IMR-90 (cell line): ENCODE measurements at regions of chr4 and their contacts with region 1.

Region 1: GRCh38 chr4:122602277-122603142 is 18.4 kb downstream of the IL21 start:
- DNase-seq: peak; percentile 54
- ATAC-seq: peak; percentile 89
- H3K4me3 ChIP-seq: no peak overlapping the region
- H3K27ac ChIP-seq: no peak overlapping the region
- H3K4me1 ChIP-seq: no peaks in the 10 kb centered on the region
- H3K27me3 ChIP-seq: peaks cover 2% of the 10 kb centered on the region; the same call in 1 of the 2 replicates
- CTCF ChIP-seq: peak; percentile 54
- POLR2A ChIP-seq: no peak
- RAD21 ChIP-seq: peak; percentile 62

Region 2: GRCh38 chr4:122588453-122589238 is 13.9 kb before region 1 on chr4:
- CTCF ChIA-PET with region 1: no interaction called
- POLR2A ChIA-PET with region 1: no interaction called
- dilution Hi-C with region 1: no loop called
- in situ Hi-C with region 1: no loop called
- intact Hi-C with region 1: no loop called
- DNase-seq: peak; percentile 91
- ATAC-seq: peak; percentile 60
- H3K4me3 ChIP-seq: no peak overlapping the region
- H3K27ac ChIP-seq: no peak overlapping the region
- H3K4me1 ChIP-seq: peaks cover 12% of the 10 kb centered on the region
- H3K27me3 ChIP-seq: no peaks in the 10 kb centered on the region
- CTCF ChIP-seq: no peak
- POLR2A ChIP-seq: no peak
- RAD21 ChIP-seq: no peak

Region 3: DNA sequence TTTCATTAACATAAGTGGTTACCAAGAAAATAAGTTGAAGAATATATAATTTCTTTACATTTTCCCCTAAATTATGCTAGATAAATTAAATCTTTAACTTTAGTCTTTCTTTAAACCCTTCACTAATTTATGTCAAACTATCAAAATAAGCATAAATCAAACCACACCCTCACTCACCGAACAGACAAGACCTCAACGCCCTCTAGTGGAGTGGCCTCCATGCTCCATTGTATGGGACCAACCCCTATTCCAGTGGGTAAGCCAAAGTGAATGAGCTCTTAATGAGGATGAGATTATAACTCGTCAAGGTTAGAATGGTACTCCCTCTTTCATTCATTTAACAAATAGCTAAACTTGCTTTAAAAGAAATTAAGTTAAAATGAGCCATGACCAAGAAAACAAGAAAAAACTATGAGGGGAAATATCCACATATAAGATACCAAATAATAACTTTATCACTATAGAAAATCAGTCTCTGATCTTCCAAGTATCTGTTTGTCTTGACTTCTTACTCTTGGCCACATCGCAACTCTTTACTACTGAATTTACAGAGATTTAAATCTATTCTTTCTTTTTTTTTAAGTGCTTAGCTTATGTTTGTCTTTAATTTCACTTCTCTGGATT is 114.4 kb after region 1 on chr4:
- CTCF ChIA-PET with region 1: interaction called, 18 read pairs
- POLR2A ChIA-PET with region 1: interaction called, 5 read pairs
- dilution Hi-C with region 1: no loop called
- in situ Hi-C with region 1: loop called (anchors 5 kb)
- intact Hi-C with region 1: loop called (anchors 1 kb)
- DNase-seq: peak; percentile 63
- ATAC-seq: peak; percentile 90
- H3K4me3 ChIP-seq: no peak overlapping the region
- H3K27ac ChIP-seq: no peak overlapping the region
- H3K4me1 ChIP-seq: no peaks in the 10 kb centered on the region
- H3K27me3 ChIP-seq: no peaks in the 10 kb centered on the region
- CTCF ChIP-seq: peak; percentile 86
- POLR2A ChIP-seq: no peak
- RAD21 ChIP-seq: peak; percentile 80

Region 4: DNA sequence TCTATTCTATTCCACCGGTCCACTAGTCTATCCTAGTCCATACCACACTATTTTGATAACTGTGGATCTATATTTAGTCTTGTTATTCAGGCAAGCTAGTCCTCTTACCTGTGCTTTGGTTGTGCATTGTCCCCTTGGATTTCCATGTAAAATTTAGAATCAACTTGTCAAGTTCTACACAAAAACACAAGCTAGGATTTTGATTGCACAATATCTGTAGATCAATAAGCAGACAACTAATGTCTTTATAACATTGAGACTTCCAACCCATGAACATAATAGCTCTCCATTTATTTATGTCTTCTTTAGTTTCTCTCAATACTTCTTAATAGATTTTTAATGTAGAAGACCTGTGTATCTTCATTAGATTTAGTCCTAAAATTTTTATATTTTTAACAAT is 119.7 kb after region 1 on chr4:
- CTCF ChIA-PET with region 1: interaction called, 18 read pairs
- POLR2A ChIA-PET with region 1: no interaction called
- dilution Hi-C with region 1: no loop called
- in situ Hi-C with region 1: loop called (anchors 5 kb)
- intact Hi-C with region 1: loop called (anchors 1 kb)
- DNase-seq: no peak
- ATAC-seq: no peak
- H3K4me3 ChIP-seq: no peak overlapping the region
- H3K27ac ChIP-seq: no peak overlapping the region
- H3K4me1 ChIP-seq: no peaks in the 10 kb centered on the region
- H3K27me3 ChIP-seq: no peaks in the 10 kb centered on the region; the same call in 1 of the 2 replicates
- CTCF ChIP-seq: no peak
- POLR2A ChIP-seq: no peak
- RAD21 ChIP-seq: no peak

Region 5: DNA sequence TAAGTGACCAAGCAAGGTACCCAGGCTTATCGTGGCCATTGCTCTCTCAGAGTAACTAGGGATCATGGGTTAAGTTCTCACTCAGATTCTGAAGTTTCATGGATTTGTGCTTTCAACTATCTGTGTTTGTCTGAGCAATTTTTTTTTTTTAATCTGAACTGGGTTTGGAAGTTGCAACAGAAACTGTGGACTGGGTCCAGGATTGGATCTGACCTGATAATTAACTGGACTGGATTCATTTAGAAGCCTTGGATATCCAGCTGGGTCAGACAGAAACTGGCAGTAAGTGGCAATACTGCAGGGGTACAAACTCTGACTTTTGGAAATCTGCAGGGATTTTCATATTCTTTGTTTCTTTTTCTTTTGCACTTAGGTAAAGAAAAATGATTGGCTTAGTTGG is 185.4 kb after region 1 on chr4:
- CTCF ChIA-PET with region 1: no interaction called
- POLR2A ChIA-PET with region 1: no interaction called
- dilution Hi-C with region 1: no loop called
- in situ Hi-C with region 1: no loop called
- intact Hi-C with region 1: no loop called
- DNase-seq: no peak
- ATAC-seq: no peak
- H3K4me3 ChIP-seq: no peak overlapping the region
- H3K27ac ChIP-seq: no peak overlapping the region
- H3K4me1 ChIP-seq: peaks cover 4% of the 10 kb centered on the region
- H3K27me3 ChIP-seq: no peaks in the 10 kb centered on the region
- CTCF ChIP-seq: no peak
- POLR2A ChIP-seq: no peak
- RAD21 ChIP-seq: no peak

Region 6: DNA sequence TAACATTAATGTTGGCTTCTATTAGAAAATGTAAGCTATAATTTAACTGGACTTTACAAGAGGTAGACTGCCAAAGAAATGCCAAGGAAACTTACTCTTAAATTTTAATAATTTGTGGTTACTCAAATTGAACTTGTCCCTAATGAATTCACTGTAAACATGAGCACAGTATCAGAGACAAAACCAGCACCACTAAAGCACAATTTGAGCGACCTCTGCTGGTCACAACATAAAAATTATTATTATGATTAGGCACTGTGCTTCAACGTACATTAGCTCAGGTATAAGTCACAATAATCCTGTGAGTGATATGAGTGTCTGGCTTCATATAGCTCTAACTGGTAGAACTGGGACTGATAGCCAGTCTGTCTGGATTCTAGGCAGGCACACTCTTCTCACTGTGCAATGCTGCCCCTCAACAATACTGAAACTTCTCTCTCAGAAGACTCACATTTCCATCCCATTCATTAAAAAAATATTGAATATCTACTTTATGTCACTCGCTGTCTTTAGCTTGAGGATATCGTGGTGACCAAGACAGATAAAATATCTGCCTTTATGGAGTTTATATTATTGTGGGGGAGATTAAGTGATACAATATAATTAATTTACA is 311.9 kb after region 1 on chr4:
- CTCF ChIA-PET with region 1: interaction called, 7 read pairs
- POLR2A ChIA-PET with region 1: no interaction called
- dilution Hi-C with region 1: loop called (anchors 25 kb)
- in situ Hi-C with region 1: no loop called
- intact Hi-C with region 1: loop called (anchors 5 kb)
- DNase-seq: peak; percentile 68
- ATAC-seq: peak; percentile 89
- H3K4me3 ChIP-seq: no peak overlapping the region; the same call in 1 of the 2 replicates
- H3K27ac ChIP-seq: no peak overlapping the region
- H3K4me1 ChIP-seq: peaks cover 9% of the 10 kb centered on the region
- H3K27me3 ChIP-seq: no peaks in the 10 kb centered on the region
- CTCF ChIP-seq: peak; percentile 75
- POLR2A ChIP-seq: no peak
- RAD21 ChIP-seq: peak; percentile 84

Region 7: DNA sequence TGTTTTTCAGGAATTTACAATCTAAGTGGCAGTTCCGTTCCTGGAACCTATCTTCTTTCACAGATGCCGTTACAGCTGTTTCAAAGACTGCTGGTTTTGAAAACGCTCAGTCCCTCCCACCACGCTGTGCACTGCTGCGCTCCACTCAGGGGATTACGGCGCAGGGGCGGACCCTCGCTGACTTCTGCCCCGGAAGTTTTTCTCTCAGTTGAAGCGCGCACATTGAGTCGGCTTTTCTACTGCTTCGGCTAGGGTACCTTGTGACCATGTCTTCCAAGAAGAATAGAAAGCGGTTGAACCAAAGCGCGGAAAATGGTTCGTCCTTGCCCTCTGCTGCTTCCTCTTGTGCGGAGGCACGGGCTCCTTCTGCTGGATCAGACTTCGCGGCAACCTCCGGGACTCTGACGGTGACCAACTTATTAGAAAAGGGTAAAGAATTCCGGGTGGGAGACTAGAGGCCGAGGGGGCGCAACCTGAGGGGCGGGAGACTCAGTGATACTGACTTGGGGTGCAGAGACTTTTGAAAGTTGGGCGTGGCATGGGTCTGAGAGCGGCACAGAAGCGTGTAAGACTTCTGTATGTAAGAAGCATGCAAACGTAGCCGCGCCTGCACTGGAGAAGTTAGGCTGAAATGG is 320.5 kb after region 1 on chr4:
- CTCF ChIA-PET with region 1: no interaction called
- POLR2A ChIA-PET with region 1: no interaction called
- dilution Hi-C with region 1: loop called (anchors 25 kb)
- in situ Hi-C with region 1: loop called (anchors 5 kb)
- intact Hi-C with region 1: no loop called
- DNase-seq: peak; percentile 82
- ATAC-seq: peak; percentile 94
- H3K4me3 ChIP-seq: peak overlapping the region; percentile 93
- H3K27ac ChIP-seq: peak overlapping the region; percentile 83
- H3K4me1 ChIP-seq: no peaks in the 10 kb centered on the region
- H3K27me3 ChIP-seq: no peaks in the 10 kb centered on the region
- CTCF ChIP-seq: no peak
- POLR2A ChIP-seq: no peak
- RAD21 ChIP-seq: no peak

Region 8: DNA sequence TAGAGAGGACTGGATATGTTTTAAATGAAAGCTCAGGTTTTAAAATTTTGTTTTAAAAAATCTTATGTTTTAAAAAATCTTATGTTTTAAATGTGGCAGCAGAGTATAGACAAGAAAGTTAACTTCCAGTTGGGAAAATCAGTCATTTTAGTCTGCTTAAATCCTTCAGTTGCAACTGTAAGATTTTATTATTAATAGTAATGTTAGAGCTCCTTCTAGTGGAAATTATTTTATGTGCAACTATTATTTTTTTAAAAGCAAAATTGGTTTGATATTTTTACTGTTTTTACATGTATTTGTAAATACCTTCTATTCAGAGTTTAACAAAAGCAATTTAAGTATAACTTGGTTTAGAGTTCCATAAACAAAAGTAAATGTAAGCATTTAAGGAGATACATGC is 328.4 kb after region 1 on chr4:
- CTCF ChIA-PET with region 1: no interaction called
- POLR2A ChIA-PET with region 1: no interaction called
- dilution Hi-C with region 1: no loop called
- in situ Hi-C with region 1: no loop called
- intact Hi-C with region 1: loop called (anchors 2 kb)
- DNase-seq: peak; percentile 41
- ATAC-seq: no peak
- H3K4me3 ChIP-seq: no peak overlapping the region
- H3K27ac ChIP-seq: no peak overlapping the region
- H3K4me1 ChIP-seq: no peaks in the 10 kb centered on the region
- H3K27me3 ChIP-seq: no peaks in the 10 kb centered on the region
- CTCF ChIP-seq: peak; percentile 67
- POLR2A ChIP-seq: no peak
- RAD21 ChIP-seq: peak; percentile 60